HCT116 (cell line): ENCODE measurements at regions of chr7 and their contacts with region 1.

Region 1: DNA sequence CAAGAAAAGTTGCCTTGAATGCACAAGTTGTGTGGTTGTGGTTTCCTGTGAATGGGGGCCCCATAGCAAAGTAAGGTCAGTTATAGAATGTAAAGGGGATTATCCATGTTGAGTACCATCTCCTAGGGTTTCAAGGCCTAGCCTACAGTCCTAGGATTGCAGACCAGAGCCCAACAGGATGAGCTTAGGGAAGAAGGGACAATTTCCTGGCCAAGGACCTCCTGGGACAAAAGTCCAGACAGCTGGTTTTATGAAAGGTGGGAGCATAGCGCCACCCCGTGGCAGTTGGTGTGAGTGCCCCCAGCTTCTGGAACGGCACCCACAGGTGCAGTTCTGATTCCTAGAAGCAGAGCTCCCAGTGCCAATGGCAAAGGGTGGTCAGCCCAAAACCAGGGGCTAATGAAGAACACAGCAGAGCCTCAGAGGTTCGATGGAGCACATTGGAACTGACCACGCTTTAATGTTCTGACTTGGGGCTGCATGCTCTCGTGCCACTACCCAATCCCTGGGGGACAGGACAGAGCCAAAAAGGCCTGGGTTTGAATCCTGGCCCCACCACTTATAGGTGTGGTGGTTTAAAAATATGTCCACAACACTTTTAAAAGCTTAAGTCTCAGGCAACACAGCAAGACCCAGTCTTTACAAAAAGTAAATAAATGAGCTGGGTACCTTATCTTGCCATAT is 25.8 kb upstream of the TMEM120A start:
- DNase-seq: peak; percentile 47
- ATAC-seq: peak; percentile 93
- H3K4me3 ChIP-seq: no peak overlapping the region
- H3K27ac ChIP-seq: no peak overlapping the region
- H3K4me1 ChIP-seq: no peaks in the 10 kb centered on the region
- H3K27me3 ChIP-seq: no peaks in the 10 kb centered on the region
- CTCF ChIP-seq: peak; percentile 86 to 97 (median 90)
- POLR2A ChIP-seq: no peak
- RAD21 ChIP-seq: peak; percentile 97

Region 2: GRCh38 chr7:75711656-75712514 is 308.3 kb before region 1 on chr7:
- CTCF ChIA-PET with region 1: no interaction called
- POLR2A ChIA-PET with region 1: no interaction called
- RAD21 ChIA-PET with region 1: no interaction called
- intact Hi-C with region 1: no loop called
- DNase-seq: no peak
- ATAC-seq: no peak
- H3K4me3 ChIP-seq: no peak overlapping the region
- H3K27ac ChIP-seq: no peak overlapping the region
- H3K4me1 ChIP-seq: peaks cover 3 to 4% of the 10 kb centered on the region in 2 experiments; a peak in 3 of 4 replicates
- H3K27me3 ChIP-seq: no peaks in the 10 kb centered on the region
- CTCF ChIP-seq: no peak
- POLR2A ChIP-seq: no peak
- RAD21 ChIP-seq: no peak

Region 3: DNA sequence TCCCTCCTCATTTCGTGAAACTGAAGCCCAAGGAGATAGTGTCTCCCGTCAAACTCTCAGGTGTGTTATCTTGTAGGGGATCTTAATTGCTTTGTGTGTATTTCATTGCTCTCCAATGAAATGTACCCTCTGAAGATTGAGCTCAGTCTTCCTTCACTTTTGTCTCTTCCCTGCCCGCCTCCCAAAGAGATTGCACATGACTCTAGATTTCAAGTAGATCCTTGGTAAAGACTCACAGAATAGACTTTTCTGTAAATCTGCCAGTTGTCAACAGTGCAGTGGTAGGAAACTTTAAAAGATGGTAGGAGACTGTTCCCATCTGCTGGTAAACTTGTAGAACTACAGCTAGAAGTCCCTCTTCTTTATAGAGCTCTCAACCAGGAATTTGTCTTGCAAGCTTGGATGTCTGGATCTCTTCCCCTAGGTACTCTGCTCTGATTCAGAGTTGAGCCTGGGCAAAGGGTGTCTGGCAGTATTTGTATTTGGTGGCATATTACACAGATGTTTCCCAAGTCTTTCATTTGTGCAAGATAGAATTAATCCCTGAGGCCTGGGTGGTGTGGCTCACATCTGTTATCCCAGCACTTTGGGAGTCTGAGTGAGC is 257.8 kb before region 1 on chr7:
- CTCF ChIA-PET with region 1: interaction called, 15 read pairs
- POLR2A ChIA-PET with region 1: no interaction called
- RAD21 ChIA-PET with region 1: interaction called, 6 to 7 read pairs
- intact Hi-C with region 1: loop called (anchors 10 kb)
- DNase-seq: peak; percentile 40
- ATAC-seq: peak; percentile 93
- H3K4me3 ChIP-seq: no peak overlapping the region
- H3K27ac ChIP-seq: no peak overlapping the region
- H3K4me1 ChIP-seq: no peaks in the 10 kb centered on the region
- H3K27me3 ChIP-seq: no peaks in the 10 kb centered on the region
- CTCF ChIP-seq: peak; percentile 62 to 77 (median 68); a peak in 5 of 6 replicates
- POLR2A ChIP-seq: no peak
- RAD21 ChIP-seq: peak; percentile 92

Region 4: GRCh38 chr7:75866489-75867389 is 153.4 kb before region 1 on chr7:
- CTCF ChIA-PET with region 1: interaction called, 72 read pairs
- POLR2A ChIA-PET with region 1: interaction called, 4 read pairs
- RAD21 ChIA-PET with region 1: interaction called, 16 to 22 read pairs
- intact Hi-C with region 1: loop called (anchors 1 kb)
- DNase-seq: peak; percentile 48
- ATAC-seq: peak; percentile 94
- H3K4me3 ChIP-seq: no peak overlapping the region
- H3K27ac ChIP-seq: no peak overlapping the region
- H3K4me1 ChIP-seq: peaks cover 0 to 8% of the 10 kb centered on the region in 2 experiments; a peak in 2 of 4 replicates
- H3K27me3 ChIP-seq: no peaks in the 10 kb centered on the region
- CTCF ChIP-seq: peak; percentile 92 to 98 (median 92)
- POLR2A ChIP-seq: no peak
- RAD21 ChIP-seq: peak; percentile 99

Region 5: GRCh38 chr7:75872073-75872782 is 147.9 kb before region 1 on chr7:
- CTCF ChIA-PET with region 1: interaction called, 72 read pairs
- POLR2A ChIA-PET with region 1: no interaction called
- RAD21 ChIA-PET with region 1: interaction called in 1 of 2 experiments, 22 read pairs
- intact Hi-C with region 1: no loop called
- DNase-seq: no peak
- ATAC-seq: no peak
- H3K4me3 ChIP-seq: no peak overlapping the region
- H3K27ac ChIP-seq: no peak overlapping the region
- H3K4me1 ChIP-seq: peaks cover 0 to 14% of the 10 kb centered on the region in 2 experiments; a peak in 3 of 4 replicates
- H3K27me3 ChIP-seq: no peaks in the 10 kb centered on the region
- CTCF ChIP-seq: no peak
- POLR2A ChIP-seq: no peak
- RAD21 ChIP-seq: no peak

Region 6: GRCh38 chr7:76008156-76008687 is 12.0 kb before region 1 on chr7:
- CTCF ChIA-PET with region 1: interaction called, 10 read pairs
- POLR2A ChIA-PET with region 1: no interaction called
- RAD21 ChIA-PET with region 1: no interaction called
- intact Hi-C with region 1: no loop called
- DNase-seq: no peak
- ATAC-seq: no peak
- H3K4me3 ChIP-seq: no peak overlapping the region
- H3K27ac ChIP-seq: no peak overlapping the region
- H3K4me1 ChIP-seq: peaks cover 15 to 24% of the 10 kb centered on the region in 2 experiments
- H3K27me3 ChIP-seq: no peaks in the 10 kb centered on the region
- CTCF ChIP-seq: no peak
- POLR2A ChIP-seq: no peak
- RAD21 ChIP-seq: no peak